CD8-positive, alpha-beta memory T cell (primary cell): ENCODE measurements at regions of chr6 and their contacts with region 1.

Region 1: GRCh38 chr6:142207265-142207877 is 60.3 kb downstream of the VTA1 start:
- DNase-seq: peak; percentile 6 to 60 (median 23)
- H3K4me3 ChIP-seq: no peak overlapping the region
- H3K4me3 Mint-ChIP-seq: no peak overlapping the region
- H3K27ac ChIP-seq: no peak overlapping the region
- H3K27ac Mint-ChIP-seq: peak overlapping the region in 3 of 8 donors; percentile 19 to 57 (median 47)
- H3K4me1 ChIP-seq: no peaks in the 10 kb centered on the region
- H3K4me1 Mint-ChIP-seq: peaks cover 0 to 4% (median 3%) of the 10 kb centered on the region in 3 donors
- H3K27me3 ChIP-seq: no peaks in the 10 kb centered on the region
- H3K27me3 Mint-ChIP-seq: no peaks in the 10 kb centered on the region

Region 2: GRCh38 chr6:142146828-142147662 is 60.3 kb before region 1 on chr6 and contains the starts of genes NMBR and VTA1:
- CTCF ChIA-PET with region 1: interaction called, 11 read pairs
- POLR2A ChIA-PET with region 1: no interaction called
- DNase-seq: peak; percentile 94 to 98 (median 97)
- H3K4me3 ChIP-seq: peak within 1 kb of the TSS; percentile 93
- H3K4me3 Mint-ChIP-seq: peak within 1 kb of the TSS; percentile 90 to 96 (median 95)
- H3K27ac ChIP-seq: peak within 1 kb of the TSS; percentile 82
- H3K27ac Mint-ChIP-seq: peak within 1 kb of the TSS; percentile 82 to 94 (median 92)
- H3K4me1 ChIP-seq: peaks cover 39% of the 10 kb centered on the region
- H3K4me1 Mint-ChIP-seq: peaks cover 57 to 71% (median 66%) of the 10 kb centered on the region in 3 donors
- H3K27me3 ChIP-seq: no peaks in the 10 kb centered on the region
- H3K27me3 Mint-ChIP-seq: peaks cover 0 to 4% of the 10 kb centered on the region in 2 donors
- total RNA-seq, gene NMBR: not detected
- total RNA-seq, gene VTA1: 63.8 to 66.5 TPM